ENCODE measurements at regions of chr4 and their contacts with region 1.

Region 1: GRCh38 chr4:114378306-114378903 is 220.2 kb upstream of the UGT8 start:
- DNase-seq: peak; percentile 32
- H3K4me3 ChIP-seq: no peak overlapping the region
- H3K27ac ChIP-seq: no peak overlapping the region
- H3K4me1 ChIP-seq: peaks cover 6% of the 10 kb centered on the region
- H3K27me3 ChIP-seq: no peaks in the 10 kb centered on the region
- CTCF ChIP-seq: peak; percentile 73 to 74

Region 2: GRCh38 chr4:113106108-113106507 is 1272.3 kb before region 1 on chr4:
- CTCF ChIA-PET with region 1: no interaction called
- dilution Hi-C with region 1: no loop called
- in situ Hi-C with region 1: no loop called
- intact Hi-C with region 1: loop called (anchors 5 kb)
- DNase-seq: peak; percentile 10
- H3K4me3 ChIP-seq: no peak overlapping the region
- H3K27ac ChIP-seq: no peak overlapping the region
- H3K4me1 ChIP-seq: no peaks in the 10 kb centered on the region
- H3K27me3 ChIP-seq: peaks cover 2% of the 10 kb centered on the region
- CTCF ChIP-seq: peak; percentile 33 to 52

Region 3: DNA sequence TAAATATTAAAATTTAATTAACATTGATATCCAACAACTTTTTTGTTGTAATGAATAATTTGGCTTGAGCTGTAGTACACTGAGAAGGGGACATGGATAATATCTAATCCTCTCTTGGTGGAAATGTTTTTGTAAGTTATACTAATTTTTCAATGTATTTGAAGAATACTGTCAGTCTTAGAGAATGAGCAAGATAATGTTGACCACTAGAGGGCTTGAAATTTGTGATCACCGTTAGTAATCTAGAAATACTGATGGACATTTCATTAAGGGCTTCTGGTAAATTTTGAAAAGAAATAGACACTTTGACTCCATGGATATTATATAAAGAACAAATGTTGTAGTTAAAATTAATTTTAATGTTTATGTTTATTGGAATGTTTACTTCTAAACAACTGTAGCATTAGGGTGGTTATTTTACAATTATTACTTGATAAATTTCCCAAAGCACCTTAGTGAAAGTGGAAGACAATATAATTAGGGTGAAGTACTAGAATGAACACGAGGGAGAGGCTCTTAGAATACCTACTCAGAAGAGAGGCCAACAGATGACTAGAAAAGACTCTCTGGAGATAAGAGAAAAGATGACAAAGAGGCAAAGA is 596.9 kb before region 1 on chr4:
- CTCF ChIA-PET with region 1: no interaction called
- dilution Hi-C with region 1: no loop called
- in situ Hi-C with region 1: no loop called
- intact Hi-C with region 1: loop called (anchors 1 kb)
- DNase-seq: no peak
- H3K4me3 ChIP-seq: no peak overlapping the region
- H3K27ac ChIP-seq: no peak overlapping the region
- H3K4me1 ChIP-seq: peaks cover 15% of the 10 kb centered on the region
- H3K27me3 ChIP-seq: no peaks in the 10 kb centered on the region
- CTCF ChIP-seq: peak; percentile 66 to 83

Region 4: GRCh38 chr4:114057746-114058145 is 320.7 kb before region 1 on chr4:
- CTCF ChIA-PET with region 1: no interaction called
- dilution Hi-C with region 1: no loop called
- in situ Hi-C with region 1: no loop called
- intact Hi-C with region 1: loop called (anchors 5 kb)
- DNase-seq: peak; percentile 62
- H3K4me3 ChIP-seq: peak overlapping the region in 1 of 3 experiments; percentile 5
- H3K27ac ChIP-seq: peak overlapping the region; percentile 59
- H3K4me1 ChIP-seq: peaks cover 11% of the 10 kb centered on the region
- H3K27me3 ChIP-seq: no peaks in the 10 kb centered on the region
- CTCF ChIP-seq: no peak

Region 5: GRCh38 chr4:114208574-114209151 is 169.7 kb before region 1 on chr4:
- CTCF ChIA-PET with region 1: no interaction called
- dilution Hi-C with region 1: no loop called
- in situ Hi-C with region 1: no loop called
- intact Hi-C with region 1: loop called (anchors 1 kb)
- DNase-seq: peak; percentile 12
- H3K4me3 ChIP-seq: no peak overlapping the region
- H3K27ac ChIP-seq: no peak overlapping the region
- H3K4me1 ChIP-seq: no peaks in the 10 kb centered on the region
- H3K27me3 ChIP-seq: no peaks in the 10 kb centered on the region
- CTCF ChIP-seq: peak in 1 of 2 donors; percentile 51

Measured in mammary epithelial cell (primary cell).